Activated CD4-positive, alpha-beta memory T cell treated with anti-CD3 and anti-CD28 coated beads for 36 hours (primary cell): ENCODE measurements at regions of chr11 and their contacts with region 1.

Region 1: DNA sequence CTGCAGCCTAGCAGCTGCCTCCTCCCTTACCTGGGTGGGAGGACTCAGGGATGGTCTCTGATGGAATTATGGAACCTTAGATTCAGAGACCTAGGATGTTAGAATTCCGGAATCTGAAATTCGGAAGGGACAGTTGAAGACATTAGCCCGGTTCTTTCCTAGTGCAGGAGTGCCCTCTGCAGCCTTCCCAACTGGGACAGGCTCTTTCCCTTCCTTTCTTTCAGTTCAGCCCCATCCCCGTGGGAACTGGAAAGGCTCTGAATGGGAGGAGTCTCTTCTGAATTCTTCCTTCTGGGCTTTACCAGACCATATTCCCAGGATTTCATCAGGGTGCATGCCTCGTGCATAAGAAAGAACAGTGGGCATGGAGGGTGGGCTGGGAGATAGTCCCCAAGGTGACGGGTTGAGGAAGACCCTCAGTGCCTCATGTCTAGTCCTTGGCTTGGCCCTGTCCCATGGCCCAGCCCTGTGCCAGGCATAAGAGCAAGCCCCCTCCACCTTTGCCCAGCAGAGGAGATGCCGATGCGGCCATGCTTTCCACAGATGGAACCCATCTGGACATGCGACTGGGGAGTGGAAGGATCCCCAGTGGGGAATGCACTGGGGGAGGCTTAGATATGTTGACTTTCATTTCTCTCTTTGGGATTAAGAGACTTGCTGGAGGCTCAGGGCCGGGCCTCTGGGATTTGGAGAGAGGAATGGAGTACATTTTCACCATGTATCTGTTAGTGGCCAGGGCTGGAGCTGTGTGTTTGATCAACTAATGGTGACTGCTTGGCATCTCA is 14.4 kb downstream of the DNAJB13 start:
- DNase-seq: no peak
- H3K4me3 Mint-ChIP-seq: no peak overlapping the region
- H3K27ac Mint-ChIP-seq: no peak overlapping the region
- H3K4me1 Mint-ChIP-seq: peaks cover 41% of the 10 kb centered on the region
- H3K27me3 Mint-ChIP-seq: no peaks in the 10 kb centered on the region

Region 2: DNA sequence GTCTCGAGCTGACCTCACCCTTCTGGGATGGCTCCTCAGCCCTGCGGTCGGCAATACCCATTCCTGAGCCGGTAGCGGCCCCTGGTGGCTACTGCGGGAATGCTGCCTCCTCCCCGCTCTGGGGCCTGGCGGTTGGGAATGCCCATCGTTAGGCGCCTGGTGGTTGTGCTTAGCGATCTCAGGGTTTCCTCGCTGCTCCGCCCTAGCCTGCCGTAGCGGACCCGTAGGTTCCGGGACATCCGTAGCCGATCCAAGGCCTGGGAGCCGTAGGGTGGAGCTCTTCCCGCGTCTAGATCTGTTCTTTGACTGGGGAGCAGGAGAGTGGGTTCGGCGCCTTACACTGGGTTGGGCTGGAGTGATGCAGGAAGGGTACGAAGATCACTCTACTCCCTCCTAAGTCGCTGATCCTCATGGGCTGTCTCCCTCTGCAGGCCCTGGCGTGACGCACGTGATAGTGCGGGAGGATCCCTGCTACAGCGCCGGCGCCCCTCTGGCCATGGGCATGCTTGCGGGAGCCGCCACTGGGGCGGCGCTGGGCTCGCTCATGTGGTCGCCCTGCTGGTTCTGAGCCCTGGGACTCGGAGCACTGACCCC is 304.1 kb before region 1 on chr11:
- CTCF ChIA-PET with region 1: no interaction called
- POLR2A ChIA-PET with region 1: no interaction called
- intact Hi-C with region 1: no loop called
- DNase-seq: peak; percentile 90
- H3K4me3 Mint-ChIP-seq: peak overlapping the region; percentile 37
- H3K27ac Mint-ChIP-seq: no peak overlapping the region
- H3K4me1 Mint-ChIP-seq: peaks cover 3% of the 10 kb centered on the region
- H3K27me3 Mint-ChIP-seq: no peaks in the 10 kb centered on the region

Region 3: DNA sequence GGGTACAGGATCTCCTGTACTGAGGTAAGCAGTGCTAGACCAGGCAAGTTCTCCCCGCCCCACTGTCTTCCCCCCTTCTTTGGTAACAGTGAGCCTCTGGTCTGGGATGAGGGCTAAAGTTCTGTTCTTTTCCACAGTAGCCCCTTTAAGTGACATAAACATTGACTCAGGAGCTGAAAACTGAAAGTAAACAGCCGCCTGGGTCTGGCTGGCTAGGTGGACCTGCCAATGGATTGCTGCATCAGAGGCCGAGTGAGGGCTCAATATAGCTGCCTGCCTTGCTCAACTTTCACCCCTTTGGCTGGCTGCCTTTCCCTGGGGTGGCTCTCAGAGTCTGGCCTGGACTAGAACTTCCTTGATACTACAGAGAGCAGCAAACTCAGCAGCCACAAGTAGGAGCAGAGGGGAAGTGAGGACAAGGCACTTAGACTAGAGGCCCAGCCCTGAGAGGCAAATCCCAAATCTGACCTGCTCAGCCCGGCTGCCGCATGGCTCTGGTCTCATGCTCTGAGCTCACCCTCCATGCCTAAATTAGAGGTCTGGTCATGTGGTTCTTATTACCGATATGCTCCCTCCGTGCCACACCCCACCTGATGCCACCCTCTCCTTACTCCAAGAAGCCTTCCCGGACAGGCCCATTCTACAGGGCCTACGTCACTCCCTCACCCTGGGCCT is 53.2 kb after region 1 on chr11:
- CTCF ChIA-PET with region 1: no interaction called
- POLR2A ChIA-PET with region 1: interaction called, 19 read pairs
- intact Hi-C with region 1: no loop called
- DNase-seq: no peak
- H3K4me3 Mint-ChIP-seq: no peak overlapping the region
- H3K27ac Mint-ChIP-seq: no peak overlapping the region
- H3K4me1 Mint-ChIP-seq: peaks cover 44% of the 10 kb centered on the region
- H3K27me3 Mint-ChIP-seq: no peaks in the 10 kb centered on the region

Region 4: GRCh38 chr11:74069147-74070047 is 104.1 kb after region 1 on chr11:
- CTCF ChIA-PET with region 1: interaction called, 11 read pairs
- POLR2A ChIA-PET with region 1: no interaction called
- intact Hi-C with region 1: no loop called
- DNase-seq: no peak
- H3K4me3 Mint-ChIP-seq: no peak overlapping the region
- H3K27ac Mint-ChIP-seq: no peak overlapping the region
- H3K4me1 Mint-ChIP-seq: peaks cover 8% of the 10 kb centered on the region
- H3K27me3 Mint-ChIP-seq: no peaks in the 10 kb centered on the region

Region 5: DNA sequence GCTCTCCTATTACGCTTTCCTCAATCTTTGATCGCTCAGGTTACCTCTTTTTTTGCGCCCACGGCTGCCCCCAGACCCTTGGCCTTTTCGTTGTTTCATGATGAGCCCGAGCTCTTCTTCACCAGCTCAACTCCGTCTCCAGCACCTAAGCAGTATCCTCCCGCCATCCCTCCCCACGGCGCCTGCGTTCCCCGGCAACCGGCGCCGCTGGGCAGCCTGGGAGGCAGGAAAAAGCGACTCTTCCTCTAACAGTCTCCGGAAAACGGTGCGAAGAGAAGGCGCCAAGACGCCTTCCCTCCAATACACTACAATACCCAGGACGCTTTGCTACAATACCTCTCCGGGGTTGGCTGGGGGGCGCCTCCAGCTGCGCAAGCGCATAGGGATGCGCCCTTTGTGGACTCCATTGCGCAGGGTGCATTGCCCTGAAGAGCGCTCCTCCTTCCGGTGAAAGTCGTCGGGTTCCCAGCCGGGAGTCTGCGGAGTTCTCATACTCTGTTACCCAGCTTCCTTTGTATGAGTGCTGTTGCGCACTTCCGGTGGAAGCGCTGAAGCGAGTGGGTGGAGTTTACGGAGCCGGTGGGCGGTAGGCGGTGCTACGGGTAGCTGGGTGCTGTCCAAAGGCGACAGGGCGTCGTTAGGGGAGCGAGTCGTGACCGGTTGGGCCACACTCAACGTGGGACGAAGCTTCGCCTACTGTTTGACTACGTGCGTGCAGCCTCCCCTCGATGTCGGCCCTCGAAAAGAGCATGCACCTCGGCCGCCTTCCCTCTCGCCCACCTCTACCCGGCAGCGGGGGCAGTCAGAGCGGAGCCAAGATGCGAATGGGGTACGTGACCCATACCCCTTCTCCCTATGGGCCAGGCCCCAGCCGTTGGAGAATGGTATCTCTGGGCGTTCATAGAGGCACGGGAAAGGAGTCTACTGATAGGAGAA is 205.7 kb after region 1 on chr11 and contains the starts of genes C2CD3 and PPME1:
- CTCF ChIA-PET with region 1: interaction called, 7 read pairs
- POLR2A ChIA-PET with region 1: no interaction called
- intact Hi-C with region 1: loop called (anchors 2 kb)
- DNase-seq: peak; percentile 99
- H3K4me3 Mint-ChIP-seq: no peak within 1 kb of the TSS
- H3K27ac Mint-ChIP-seq: no peak within 1 kb of the TSS
- H3K4me1 Mint-ChIP-seq: peaks cover 18% of the 10 kb centered on the region
- H3K27me3 Mint-ChIP-seq: no peaks in the 10 kb centered on the region
- total RNA-seq, gene C2CD3: 22.6 to 24.7 TPM
- total RNA-seq, gene PPME1: 37.9 to 38.5 TPM

Region 6: GRCh38 chr11:74321487-74322188 is 356.4 kb after region 1 on chr11:
- CTCF ChIA-PET with region 1: interaction called, 6 read pairs
- POLR2A ChIA-PET with region 1: interaction called, 3 read pairs
- intact Hi-C with region 1: loop called (anchors 1 kb)
- DNase-seq: peak; percentile 53
- H3K4me3 Mint-ChIP-seq: no peak overlapping the region
- H3K27ac Mint-ChIP-seq: no peak overlapping the region
- H3K4me1 Mint-ChIP-seq: peaks cover 2% of the 10 kb centered on the region
- H3K27me3 Mint-ChIP-seq: peaks cover 15% of the 10 kb centered on the region